GM10248 (cell line): ENCODE measurements at regions of chr22 and their contacts with region 1.

Region 1: GRCh38 chr22:26385164-26385563 is 43.9 kb upstream of the ASPHD2 start:
- DNase-seq: no peak
- CTCF ChIP-seq: no peak

Region 2: DNA sequence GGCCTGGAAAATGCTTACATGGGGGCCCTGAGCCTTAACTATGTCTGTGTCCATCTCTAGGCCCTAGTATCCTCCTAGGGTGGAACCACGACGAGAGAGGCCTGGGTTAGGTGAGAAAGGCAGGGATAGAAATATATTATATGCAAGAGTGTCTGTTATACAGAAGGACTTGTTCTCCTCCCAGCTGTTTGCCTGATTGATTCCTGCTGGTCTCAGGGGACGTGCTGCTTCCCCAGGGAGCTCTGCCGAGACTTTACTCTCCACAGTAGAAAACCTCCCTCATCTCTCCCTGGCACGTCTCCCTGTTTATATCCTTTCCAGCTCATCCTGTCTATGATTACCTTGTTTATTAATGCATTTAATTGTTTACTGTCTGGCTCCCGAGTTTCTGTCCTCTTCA is 404.8 kb after region 1 on chr22:
- CTCF ChIA-PET with region 1: no interaction called
- POLR2A ChIA-PET with region 1: interaction called, 12 read pairs
- DNase-seq: no peak
- CTCF ChIP-seq: no peak